ENCODE measurements at regions of chr15 and their contacts with region 1.

Region 1: GRCh38 chr15:79028411-79028964 is 62.1 kb downstream of the RASGRF1 start:
- DNase-seq: peak; percentile 31 to 58 (median 44)
- H3K4me3 ChIP-seq: no peak overlapping the region
- H3K27ac ChIP-seq: no peak overlapping the region
- H3K4me1 ChIP-seq: peaks cover 0 to 8% (median 4%) of the 10 kb centered on the region in 4 experiments
- H3K27me3 ChIP-seq: no peaks in the 10 kb centered on the region

Region 2: DNA sequence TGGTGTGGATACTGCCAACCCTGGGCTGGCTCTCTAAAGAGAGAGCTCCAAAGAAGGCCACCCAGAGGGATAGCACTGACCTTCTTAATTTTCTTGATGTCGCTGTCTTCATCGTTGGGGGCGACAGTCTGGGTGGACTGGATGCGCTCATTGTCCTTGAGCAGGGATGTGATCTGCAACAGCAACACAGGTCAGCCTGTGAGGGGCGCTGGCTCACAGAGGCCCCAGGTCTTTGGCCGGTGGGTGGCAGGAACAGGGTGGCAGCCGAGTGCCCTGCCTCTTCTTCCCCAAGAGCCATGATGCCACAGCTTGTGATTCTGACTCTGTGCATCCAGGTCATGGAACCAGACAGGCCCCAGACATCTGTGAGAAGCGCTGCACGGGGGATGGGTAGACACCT is 20.9 kb after region 1 on chr15:
- CTCF ChIA-PET with region 1: no interaction called
- POLR2A ChIA-PET with region 1: no interaction called
- DNase-seq: no peak
- H3K4me3 ChIP-seq: no peak overlapping the region
- H3K27ac ChIP-seq: no peak overlapping the region
- H3K4me1 ChIP-seq: no peaks in the 10 kb centered on the region
- H3K27me3 ChIP-seq: peaks cover 0 to 6% (median 0%) of the 10 kb centered on the region in 5 experiments

Region 3: DNA sequence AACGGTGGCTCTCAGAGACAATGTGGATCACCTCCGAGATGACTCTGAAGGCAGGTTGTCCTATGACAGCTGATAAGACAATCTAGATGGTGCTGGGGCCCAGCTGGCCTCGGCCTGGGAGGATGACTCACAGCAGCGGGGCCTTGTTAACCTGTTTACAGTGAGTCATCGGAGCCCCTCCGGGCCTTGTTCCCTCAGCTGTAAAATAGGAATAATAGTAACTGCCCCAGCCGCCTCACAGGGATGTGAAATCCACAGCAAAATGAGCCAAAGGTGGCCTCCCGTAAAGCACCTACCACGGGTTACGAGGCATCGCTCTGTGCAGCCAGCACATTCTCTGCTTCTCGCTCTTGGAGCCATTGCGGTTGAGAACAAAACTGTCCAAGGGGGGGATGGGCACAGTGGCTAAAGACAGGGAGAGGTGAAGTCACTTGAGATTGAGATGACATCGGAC is 150.6 kb after region 1 on chr15:
- CTCF ChIA-PET with region 1: interaction called, 88 read pairs
- POLR2A ChIA-PET with region 1: no interaction called
- DNase-seq: no peak
- H3K4me3 ChIP-seq: no peak overlapping the region
- H3K27ac ChIP-seq: no peak overlapping the region
- H3K4me1 ChIP-seq: no peaks in the 10 kb centered on the region
- H3K27me3 ChIP-seq: peaks cover 0 to 8% (median 0%) of the 10 kb centered on the region in 5 experiments

Region 4: DNA sequence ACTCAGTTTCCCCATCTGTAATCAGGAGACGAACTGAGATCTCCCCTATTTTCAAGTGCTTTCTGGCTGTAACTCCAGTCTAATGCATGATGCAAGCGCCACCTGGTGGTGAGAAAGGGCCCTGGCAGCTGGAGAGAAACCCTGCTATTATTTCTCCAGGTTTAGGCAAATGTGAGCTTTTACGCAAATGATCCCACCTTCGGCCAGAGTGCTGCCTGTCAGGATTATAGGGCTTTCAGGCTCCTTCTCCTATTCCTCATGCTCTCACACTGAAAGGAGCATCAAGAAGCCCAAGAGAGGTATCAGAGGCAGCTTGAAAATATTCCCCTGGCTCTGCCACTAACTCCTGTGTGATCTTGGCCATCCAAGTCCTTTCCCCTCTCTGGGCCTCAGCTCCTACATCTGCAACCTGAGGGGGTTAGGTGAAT is 156.0 kb after region 1 on chr15:
- CTCF ChIA-PET with region 1: interaction called, 88 read pairs
- POLR2A ChIA-PET with region 1: no interaction called
- DNase-seq: peak; percentile 50 to 72 (median 65)
- H3K4me3 ChIP-seq: no peak overlapping the region
- H3K27ac ChIP-seq: no peak overlapping the region
- H3K4me1 ChIP-seq: no peaks in the 10 kb centered on the region
- H3K27me3 ChIP-seq: no peaks in the 10 kb centered on the region

Region 5: GRCh38 chr15:79204886-79205675 is 176.6 kb after region 1 on chr15:
- CTCF ChIA-PET with region 1: no interaction called
- POLR2A ChIA-PET with region 1: no interaction called
- DNase-seq: no peak
- H3K4me3 ChIP-seq: no peak overlapping the region
- H3K27ac ChIP-seq: no peak overlapping the region
- H3K4me1 ChIP-seq: no peaks in the 10 kb centered on the region
- H3K27me3 ChIP-seq: peaks cover 9 to 46% (median 16%) of the 10 kb centered on the region in 5 experiments